GM10248 (cell line): ENCODE measurements at regions of chr17 and their contacts with region 1.

Region 1: GRCh38 chr17:50200457-50201275 is 765 bp downstream of the COL1A1 start:
- DNase-seq: peak; percentile 89
- CTCF ChIP-seq: peak; percentile 89

Region 2: DNA sequence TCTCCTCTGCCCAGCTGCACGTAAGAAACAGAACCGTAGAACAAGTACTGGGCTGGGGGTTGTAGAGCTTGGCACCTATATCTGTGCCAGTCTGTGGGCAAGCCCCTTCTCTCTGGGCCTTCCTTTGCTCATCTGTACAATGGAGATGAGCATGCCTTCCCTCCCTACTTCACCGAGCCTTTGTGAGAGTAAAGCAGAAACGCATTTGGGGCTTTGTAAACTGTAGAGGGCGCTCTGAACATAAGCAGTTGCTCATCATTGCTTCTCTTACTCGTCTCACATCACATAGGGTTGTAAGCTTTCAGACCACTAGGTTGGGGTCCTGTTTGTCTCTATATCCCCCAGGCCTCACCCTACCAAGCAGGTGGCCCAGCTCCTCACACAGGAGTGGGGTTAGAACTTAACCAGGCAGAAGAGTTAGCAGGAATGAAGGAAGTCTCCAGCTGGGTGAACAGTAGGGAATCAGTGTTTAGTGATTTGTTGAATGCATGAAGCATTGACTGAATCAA is 85.8 kb before region 1 on chr17:
- CTCF ChIA-PET with region 1: interaction called, 10 read pairs
- POLR2A ChIA-PET with region 1: no interaction called
- DNase-seq: peak; percentile 68
- CTCF ChIP-seq: peak; percentile 69

Region 3: DNA sequence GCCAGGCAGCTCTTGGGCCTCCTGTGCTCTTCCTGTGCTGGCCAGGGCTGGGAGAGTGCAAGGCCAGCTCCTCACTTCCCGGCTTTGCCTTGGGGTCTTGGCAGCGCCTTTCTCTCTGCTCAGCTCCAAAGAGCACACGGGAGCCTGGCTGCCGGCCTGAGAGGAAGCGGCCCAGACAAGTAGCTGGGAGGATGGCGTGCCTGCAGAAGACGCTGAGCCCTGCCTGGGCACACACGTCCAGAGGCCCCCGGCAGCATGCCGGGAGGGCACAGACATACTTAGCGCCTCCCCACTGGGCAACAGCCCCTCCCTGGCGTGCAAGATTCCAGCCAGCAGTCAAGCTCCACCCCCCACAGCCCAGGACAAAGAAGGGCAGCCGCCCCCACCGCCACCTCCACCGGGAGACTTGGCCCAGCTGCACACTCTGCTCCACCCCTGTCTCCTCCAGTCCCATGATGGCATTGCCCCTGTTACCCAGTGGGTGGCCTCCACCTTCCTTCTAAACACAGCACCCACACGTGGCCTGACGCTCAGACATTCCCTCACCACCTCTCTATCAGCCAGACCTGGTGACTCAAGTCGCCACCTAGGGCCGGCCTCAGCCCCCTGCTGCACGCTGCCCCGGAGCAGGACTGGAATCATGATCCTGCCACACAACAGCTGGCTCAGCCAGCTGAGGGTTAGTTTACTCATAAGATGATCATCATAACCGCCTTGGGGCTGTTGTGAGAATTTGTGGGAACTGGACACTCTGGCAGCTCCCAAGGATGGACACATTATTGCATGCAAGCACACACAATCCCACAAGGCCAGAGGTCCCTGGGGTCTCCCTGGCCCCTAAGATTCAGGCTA is 22.5 kb before region 1 on chr17:
- CTCF ChIA-PET with region 1: interaction called, 33 read pairs
- POLR2A ChIA-PET with region 1: no interaction called
- DNase-seq: peak; percentile 77
- CTCF ChIP-seq: peak; percentile 78

Region 4: DNA sequence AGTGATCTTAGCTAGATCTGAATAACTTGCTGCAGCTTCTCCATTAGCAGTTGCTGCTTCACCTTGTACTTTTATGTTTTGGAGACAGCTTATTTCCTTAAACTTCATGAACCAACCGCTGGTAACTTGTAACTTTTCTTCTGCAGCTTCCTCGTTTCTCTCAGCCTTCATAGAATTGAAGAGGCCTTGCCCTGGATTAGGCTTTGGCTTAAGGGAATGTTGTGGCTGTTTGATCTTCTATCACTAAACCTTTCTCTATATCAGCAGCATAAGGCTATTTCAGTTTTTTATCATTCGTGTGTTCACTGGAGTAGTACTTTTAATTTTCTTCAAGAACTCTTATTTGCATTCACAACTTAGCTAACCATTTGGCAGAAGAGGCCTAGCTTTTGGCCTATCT is 52.1 kb after region 1 on chr17:
- CTCF ChIA-PET with region 1: interaction called, 17 read pairs
- POLR2A ChIA-PET with region 1: no interaction called
- DNase-seq: no peak
- CTCF ChIP-seq: no peak

Region 5: DNA sequence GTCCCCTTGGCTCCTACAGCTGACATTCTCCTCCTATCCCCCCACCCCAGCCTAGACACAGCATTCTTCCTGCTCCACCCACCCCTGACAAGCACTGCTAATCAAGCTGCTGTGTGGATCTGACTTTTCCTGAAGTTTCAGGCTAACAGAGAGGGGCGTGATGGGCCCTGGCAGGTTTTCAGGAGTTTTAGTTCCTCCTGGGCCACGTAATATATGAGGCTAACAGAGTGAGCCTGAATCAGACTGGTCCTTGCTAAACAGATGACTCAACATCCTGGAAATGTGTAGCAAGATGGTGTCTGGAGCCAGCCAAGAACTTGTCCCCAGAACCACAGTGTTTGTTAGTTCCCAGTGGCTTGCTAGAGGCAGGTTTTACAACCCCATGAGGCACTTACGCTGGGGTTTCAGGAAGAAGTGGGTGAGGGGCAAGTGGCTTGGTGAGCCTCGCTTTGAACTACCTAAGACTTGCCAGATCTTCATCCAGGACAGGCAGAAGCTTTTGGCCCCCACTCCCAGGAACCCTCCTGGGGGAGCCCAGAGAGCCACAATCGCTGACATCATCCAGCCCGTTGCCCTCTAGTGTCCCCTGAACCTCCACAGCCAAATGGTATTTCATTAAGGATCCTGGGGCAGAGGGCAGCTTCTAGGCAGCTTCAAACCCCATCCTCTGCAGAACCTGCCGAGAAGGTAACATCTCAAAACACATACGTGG is 89.5 kb after region 1 on chr17:
- CTCF ChIA-PET with region 1: interaction called, 324 read pairs
- POLR2A ChIA-PET with region 1: no interaction called
- DNase-seq: no peak
- CTCF ChIP-seq: no peak

Region 6: GRCh38 chr17:50332196-50332595 is 131.5 kb after region 1 on chr17:
- CTCF ChIA-PET with region 1: interaction called, 13 read pairs
- POLR2A ChIA-PET with region 1: no interaction called
- DNase-seq: no peak
- CTCF ChIP-seq: no peak